PC-3 (cell line): ENCODE measurements at regions of chrX and their contacts with region 1.

Region 1: GRCh38 chrX:130339408-130340222 is at the start of gene SLC25A14:
- DNase-seq: peak; percentile 81
- ATAC-seq: peak; percentile 99
- H3K4me3 ChIP-seq: peak within 1 kb of the TSS; percentile 98
- H3K27ac ChIP-seq: peak within 1 kb of the TSS; percentile 26; the same call in 1 of the 2 replicates
- H3K4me1 ChIP-seq: peaks cover 9% of the 10 kb centered on the region; the same call in 1 of the 2 replicates
- H3K27me3 ChIP-seq: no peaks in the 10 kb centered on the region
- CTCF ChIP-seq: no peak
- total RNA-seq, gene SLC25A14: 12.5 and 20.4 TPM in 2 replicates

Region 2: GRCh38 chrX:130158311-130158710 is 181.3 kb before region 1 on chrX:
- CTCF ChIA-PET with region 1: no interaction called
- POLR2A ChIA-PET with region 1: interaction called, 10 read pairs
- intact Hi-C with region 1: no loop called
- DNase-seq: no peak
- ATAC-seq: no peak
- H3K4me3 ChIP-seq: no peak overlapping the region
- H3K27ac ChIP-seq: no peak overlapping the region
- H3K4me1 ChIP-seq: no peaks in the 10 kb centered on the region
- H3K27me3 ChIP-seq: no peaks in the 10 kb centered on the region
- CTCF ChIP-seq: no peak

Region 3: GRCh38 chrX:130268500-130269170 is 71.0 kb before region 1 on chrX and contains the start of gene ZNF280C:
- CTCF ChIA-PET with region 1: no interaction called
- POLR2A ChIA-PET with region 1: no interaction called
- intact Hi-C with region 1: loop called (anchors 1 kb)
- DNase-seq: peak; percentile 92
- ATAC-seq: peak; percentile 95
- H3K4me3 ChIP-seq: peak within 1 kb of the TSS; percentile 93
- H3K27ac ChIP-seq: peak within 1 kb of the TSS; percentile 56
- H3K4me1 ChIP-seq: peaks cover 14% of the 10 kb centered on the region; the same call in 1 of the 2 replicates
- H3K27me3 ChIP-seq: no peaks in the 10 kb centered on the region
- CTCF ChIP-seq: peak; percentile 25
- total RNA-seq, gene ZNF280C: 4.6 and 5.2 TPM in 2 replicates